Activated T-helper 2 cell treated with anti-CD3 and anti-CD28 coated beads, Interferon-gamma antibody, Interleukin-2, Interleukin-4, amounts not matched to agents 10 μg/mL and 5 μg/mL and 100 μg/mL, durations not matched to agents 14 hours and 24 hours and 36 hours (primary cell): ENCODE measurements at regions of chr7 and their contacts with region 1.

Region 1: GRCh38 chr7:138008547-138009349 is 6.9 kb upstream of the CREB3L2 start:
- DNase-seq: peak; percentile 15
- H3K4me3 Mint-ChIP-seq: no peak overlapping the region
- H3K27ac Mint-ChIP-seq: no peak overlapping the region
- H3K4me1 Mint-ChIP-seq: peaks cover 4% of the 10 kb centered on the region
- H3K27me3 Mint-ChIP-seq: peaks cover 12% of the 10 kb centered on the region

Region 2: GRCh38 chr7:136958016-136958415 is 1050.7 kb before region 1 on chr7:
- intact Hi-C with region 1: no loop called
- DNase-seq: no peak
- H3K4me3 Mint-ChIP-seq: no peak overlapping the region
- H3K27ac Mint-ChIP-seq: no peak overlapping the region
- H3K4me1 Mint-ChIP-seq: no peaks in the 10 kb centered on the region
- H3K27me3 Mint-ChIP-seq: no peaks in the 10 kb centered on the region

Region 3: GRCh38 chr7:137656227-137656849 is 352.4 kb before region 1 on chr7:
- intact Hi-C with region 1: loop called (anchors 1 kb)
- DNase-seq: peak; percentile 34
- H3K4me3 Mint-ChIP-seq: no peak overlapping the region
- H3K27ac Mint-ChIP-seq: no peak overlapping the region
- H3K4me1 Mint-ChIP-seq: no peaks in the 10 kb centered on the region
- H3K27me3 Mint-ChIP-seq: peaks cover 4% of the 10 kb centered on the region